Right cardiac atrium (tissue), 5 donors: ENCODE measurements at regions of chr1 and their contacts with region 1.

Region 1: GRCh38 chr1:8525558-8526275 is 207.8 kb downstream of the SLC45A1 start:
- DNase-seq: peak; percentile 79 to 91 (median 82)
- ATAC-seq: peak; percentile 99 to 100
- H3K4me3 ChIP-seq: peak overlapping the region; percentile 67
- H3K27ac ChIP-seq: peak overlapping the region; percentile 92
- H3K4me1 ChIP-seq: peaks cover 10% of the 10 kb centered on the region
- H3K27me3 ChIP-seq: no peaks in the 10 kb centered on the region

Region 2: DNA sequence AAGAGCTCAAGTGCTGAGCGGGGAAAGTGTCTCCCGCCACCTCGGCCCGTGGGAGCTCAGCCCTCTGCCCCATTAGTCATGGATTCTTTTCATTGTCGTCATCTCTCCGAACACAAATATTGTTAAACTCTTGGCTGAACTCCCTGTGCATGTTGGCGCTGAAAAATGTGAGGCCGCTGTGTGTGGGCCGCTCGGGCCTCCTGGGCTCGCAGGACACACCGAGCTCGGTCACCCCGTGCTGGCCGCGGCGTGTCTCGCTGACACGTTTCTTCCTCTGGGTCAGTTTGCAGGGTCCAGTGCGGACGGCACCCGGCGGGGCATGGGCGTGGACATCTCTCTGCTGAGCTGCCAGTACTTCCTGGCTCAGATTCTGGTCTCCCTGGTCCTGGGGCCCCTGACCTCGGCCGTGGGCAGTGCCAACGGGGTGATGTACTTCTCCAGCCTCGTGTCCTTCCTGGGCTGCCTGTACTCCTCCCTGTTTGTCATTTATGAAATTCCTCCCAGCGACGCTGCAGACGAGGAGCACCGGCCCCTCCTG is 182.2 kb before region 1 on chr1:
- intact Hi-C with region 1: no loop called
- DNase-seq: peak; percentile 88 to 95 (median 92)
- ATAC-seq: peak; percentile 83 to 90
- H3K4me3 ChIP-seq: no peak overlapping the region
- H3K27ac ChIP-seq: no peak overlapping the region
- H3K4me1 ChIP-seq: no peaks in the 10 kb centered on the region
- H3K27me3 ChIP-seq: no peaks in the 10 kb centered on the region

Region 3: DNA sequence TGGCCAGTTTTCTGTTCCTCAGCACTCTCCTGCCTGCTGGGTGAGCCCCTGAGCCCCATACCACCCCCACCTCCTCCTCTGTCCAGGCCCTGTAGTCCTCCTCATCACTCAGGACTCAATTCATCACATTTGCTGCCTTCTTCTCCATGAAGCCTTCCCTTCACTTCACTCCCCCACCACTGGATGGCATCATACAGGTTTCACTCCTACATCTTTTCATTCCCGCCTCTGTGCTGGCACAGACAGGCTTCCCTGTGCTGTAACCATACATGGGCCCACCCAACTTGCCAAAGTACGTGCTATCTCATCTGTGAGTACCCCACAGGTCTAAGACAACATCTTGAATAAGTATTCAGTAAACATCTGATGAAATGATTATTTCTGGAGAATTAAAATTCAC is 150.9 kb before region 1 on chr1:
- intact Hi-C with region 1: loop called in 1 of 4 experiments (anchors 10 kb)
- DNase-seq: peak in 1 of 3 donors; percentile 55
- ATAC-seq: no peak
- H3K4me3 ChIP-seq: no peak overlapping the region
- H3K27ac ChIP-seq: peak overlapping the region; percentile 45
- H3K4me1 ChIP-seq: peaks cover 58% of the 10 kb centered on the region
- H3K27me3 ChIP-seq: no peaks in the 10 kb centered on the region

Region 4: GRCh38 chr1:8412183-8412831 is 113.4 kb before region 1 on chr1:
- intact Hi-C with region 1: loop called in 1 of 4 experiments (anchors 10 kb)
- DNase-seq: peak in 2 of 3 donors; percentile 56 to 72
- ATAC-seq: peak; percentile 54 to 72
- H3K4me3 ChIP-seq: no peak overlapping the region
- H3K27ac ChIP-seq: peak overlapping the region; percentile 78
- H3K4me1 ChIP-seq: peaks cover 36% of the 10 kb centered on the region
- H3K27me3 ChIP-seq: no peaks in the 10 kb centered on the region

Region 5: DNA sequence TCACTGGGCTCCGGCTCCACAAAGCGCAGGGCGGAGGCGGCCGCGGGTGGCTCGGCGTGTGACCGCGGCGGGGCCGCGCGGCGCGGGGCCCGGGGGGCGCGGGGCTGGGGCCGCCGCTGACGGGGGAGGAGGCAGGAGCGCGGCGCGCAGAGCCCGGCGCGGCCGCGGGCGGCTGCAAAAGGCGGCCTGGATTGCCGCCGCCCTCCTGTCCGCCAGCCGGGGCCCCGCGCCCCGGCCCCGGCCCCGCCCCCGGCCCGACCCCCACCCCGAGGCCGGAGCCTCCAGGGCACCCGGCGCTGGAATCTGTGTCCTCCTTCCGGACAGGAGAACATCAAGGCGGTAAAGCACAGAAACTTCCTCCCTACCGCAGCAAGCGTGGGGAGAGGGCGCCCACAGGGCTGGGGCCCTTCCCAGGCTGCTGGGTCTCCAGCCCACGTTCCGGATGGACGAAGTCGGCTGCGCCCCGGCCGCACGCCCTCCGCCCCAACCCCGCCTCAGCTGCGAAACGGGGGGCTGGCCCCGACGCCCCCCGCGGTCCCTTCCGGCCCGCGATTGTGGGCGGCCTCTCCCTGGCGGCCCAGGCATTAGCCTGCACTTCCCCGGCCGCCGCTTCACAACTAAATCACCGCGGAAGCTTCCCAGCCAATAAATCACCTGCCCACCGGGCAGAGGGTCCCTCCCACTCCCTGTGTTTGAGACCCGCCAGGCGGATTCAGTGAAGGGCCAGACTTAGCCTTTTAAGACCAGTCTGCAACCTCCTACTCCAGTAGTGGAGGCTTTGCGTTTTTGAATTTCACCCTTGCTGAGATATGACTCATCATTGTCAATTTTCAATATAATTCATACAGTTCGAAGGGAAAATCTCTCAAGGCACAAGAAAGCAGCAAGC is 101.8 kb before region 1 on chr1:
- intact Hi-C with region 1: loop called in 3 of 4 experiments (anchors 10 kb)
- DNase-seq: peak; percentile 47 to 84 (median 78)
- ATAC-seq: peak; percentile 47 to 60
- H3K4me3 ChIP-seq: peak overlapping the region; percentile 96
- H3K27ac ChIP-seq: peak overlapping the region; percentile 100
- H3K4me1 ChIP-seq: peaks cover 11% of the 10 kb centered on the region
- H3K27me3 ChIP-seq: no peaks in the 10 kb centered on the region

Region 6: GRCh38 chr1:8817406-8818324 is 291.9 kb after region 1 on chr1 and contains the start of gene RERE:
- intact Hi-C with region 1: no loop called
- DNase-seq: peak; percentile 93 to 98 (median 97)
- ATAC-seq: peak; percentile 98 to 99
- H3K4me3 ChIP-seq: peak within 1 kb of the TSS; percentile 82
- H3K27ac ChIP-seq: peak within 1 kb of the TSS; percentile 96
- H3K4me1 ChIP-seq: peaks cover 3% of the 10 kb centered on the region
- H3K27me3 ChIP-seq: no peaks in the 10 kb centered on the region
- total RNA-seq, gene RERE: 155 to 175 (median 162) TPM